Activated B cell treated with CpG ODN at 0.5 μM for 24 hours (primary cell): ENCODE measurements at regions of chr1 and their contacts with region 1.

Region 1: DNA sequence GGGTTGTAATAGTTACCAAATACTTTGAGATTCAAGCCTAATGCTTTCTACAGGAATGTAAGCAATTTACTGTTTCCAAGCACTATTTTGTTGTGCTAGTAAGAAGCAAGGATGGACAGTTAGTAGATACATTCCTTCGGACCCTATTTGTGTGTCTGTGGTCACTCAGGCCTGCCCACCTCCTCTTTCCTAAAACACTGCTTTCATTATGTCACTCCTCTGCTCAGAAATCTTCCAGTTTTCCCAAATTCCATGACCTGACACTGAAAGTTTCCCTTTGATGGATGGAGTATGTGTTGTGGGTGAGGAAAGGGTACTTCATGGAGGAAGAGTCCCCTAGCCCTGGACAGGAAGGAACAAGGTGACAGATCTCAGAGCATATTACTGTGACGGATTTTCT is 141.1 kb downstream of the DISP1 start:
- DNase-seq: no peak
- ATAC-seq: no peak
- H3K4me3 Mint-ChIP-seq: no peak overlapping the region
- H3K27ac Mint-ChIP-seq: no peak overlapping the region
- H3K4me1 Mint-ChIP-seq: no peaks in the 10 kb centered on the region
- H3K27me3 Mint-ChIP-seq: no peaks in the 10 kb centered on the region
- CTCF ChIP-seq: no peak

Region 2: DNA sequence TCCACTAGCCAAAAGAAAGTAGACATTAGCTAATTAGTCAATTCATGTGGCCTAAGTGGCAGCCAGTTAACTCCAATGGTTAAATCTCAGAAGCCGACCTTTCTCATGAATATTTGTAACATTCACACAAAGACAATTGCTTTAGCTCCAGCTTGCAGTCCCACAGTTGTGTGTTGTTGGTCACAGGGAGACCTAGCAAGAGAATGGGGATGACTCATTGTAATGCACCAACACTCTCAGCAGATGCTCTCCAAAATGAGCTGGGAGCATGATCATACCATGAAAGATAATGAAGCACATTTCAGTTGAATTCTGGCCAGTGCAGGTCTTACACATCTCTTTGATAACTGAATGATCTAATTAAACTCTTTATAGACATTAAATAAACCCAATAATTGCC is 1916.3 kb before region 1 on chr1:
- CTCF ChIA-PET with region 1: no interaction called
- POLR2A ChIA-PET with region 1: no interaction called
- intact Hi-C with region 1: loop called (anchors 5 kb)
- DNase-seq: no peak
- ATAC-seq: peak; percentile 69
- H3K4me3 Mint-ChIP-seq: no peak overlapping the region
- H3K27ac Mint-ChIP-seq: no peak overlapping the region
- H3K4me1 Mint-ChIP-seq: peaks cover 16% of the 10 kb centered on the region
- H3K27me3 Mint-ChIP-seq: no peaks in the 10 kb centered on the region
- CTCF ChIP-seq: no peak

Region 3: DNA sequence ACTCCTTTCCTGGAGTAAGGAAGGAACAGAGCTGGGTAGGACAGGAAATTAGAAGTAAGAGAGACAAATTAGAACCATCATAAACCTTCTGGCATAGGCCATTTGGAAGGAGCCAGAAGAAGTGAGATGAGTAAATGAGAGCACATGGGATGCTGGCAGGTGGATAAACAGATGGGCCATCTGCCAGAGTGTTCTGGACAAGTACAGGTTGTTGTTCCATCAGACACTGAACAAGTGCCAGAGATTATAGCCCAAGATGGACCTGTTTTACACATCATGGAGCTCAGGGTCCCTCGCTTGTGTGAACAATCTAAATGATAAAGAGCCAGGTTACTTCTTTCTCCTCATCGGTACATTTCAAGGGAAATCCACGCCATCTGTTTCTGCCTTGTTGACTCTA is 608.3 kb before region 1 on chr1:
- CTCF ChIA-PET with region 1: no interaction called
- POLR2A ChIA-PET with region 1: no interaction called
- intact Hi-C with region 1: no loop called
- DNase-seq: no peak
- ATAC-seq: no peak
- H3K4me3 Mint-ChIP-seq: no peak overlapping the region
- H3K27ac Mint-ChIP-seq: no peak overlapping the region
- H3K4me1 Mint-ChIP-seq: no peaks in the 10 kb centered on the region
- H3K27me3 Mint-ChIP-seq: peaks cover 17% of the 10 kb centered on the region
- CTCF ChIP-seq: no peak

Region 4: DNA sequence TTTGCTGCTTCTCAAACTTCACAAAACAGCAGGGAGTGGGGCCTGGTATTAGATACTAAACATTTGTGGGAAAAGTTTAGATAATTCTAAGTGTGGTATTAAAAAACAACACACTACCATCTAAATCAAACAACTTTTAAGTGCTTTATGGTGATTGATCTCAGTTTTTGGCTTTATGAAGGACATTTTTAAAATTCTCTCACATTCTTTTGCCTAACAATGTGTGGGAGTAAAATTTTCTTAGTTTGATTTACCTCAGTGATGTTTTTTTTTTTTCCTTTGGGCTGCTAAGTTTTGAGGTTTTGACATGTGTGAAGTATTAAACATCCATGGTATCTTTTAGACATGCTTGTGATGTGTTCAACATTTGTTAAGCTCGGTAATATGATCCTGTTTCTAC is 24.9 kb before region 1 on chr1:
- CTCF ChIA-PET with region 1: no interaction called
- POLR2A ChIA-PET with region 1: no interaction called
- intact Hi-C with region 1: no loop called
- DNase-seq: no peak
- ATAC-seq: no peak
- H3K4me3 Mint-ChIP-seq: no peak overlapping the region
- H3K27ac Mint-ChIP-seq: no peak overlapping the region
- H3K4me1 Mint-ChIP-seq: no peaks in the 10 kb centered on the region
- H3K27me3 Mint-ChIP-seq: no peaks in the 10 kb centered on the region
- CTCF ChIP-seq: no peak

Region 5: DNA sequence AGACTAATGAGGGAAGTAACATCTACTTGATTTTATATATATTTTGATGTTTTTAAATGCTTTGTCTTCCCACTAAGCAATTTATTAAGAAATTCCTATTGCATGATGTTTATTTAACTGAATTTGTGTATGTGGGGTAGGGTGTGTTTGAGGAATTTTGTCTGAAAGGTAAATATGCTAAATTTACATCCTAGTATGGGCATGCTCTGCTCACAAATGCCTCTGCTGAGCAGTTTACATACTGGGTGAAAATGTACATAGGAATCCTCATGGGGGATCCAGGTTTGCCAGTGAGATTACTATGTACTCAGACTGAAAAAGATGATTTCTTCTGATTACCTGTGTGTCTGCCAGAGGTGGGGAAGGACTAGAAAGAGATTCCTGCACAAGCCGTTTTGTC is 14.6 kb before region 1 on chr1:
- CTCF ChIA-PET with region 1: no interaction called
- POLR2A ChIA-PET with region 1: no interaction called
- intact Hi-C with region 1: no loop called
- DNase-seq: no peak
- ATAC-seq: no peak
- H3K4me3 Mint-ChIP-seq: no peak overlapping the region
- H3K27ac Mint-ChIP-seq: no peak overlapping the region
- H3K4me1 Mint-ChIP-seq: no peaks in the 10 kb centered on the region
- H3K27me3 Mint-ChIP-seq: no peaks in the 10 kb centered on the region
- CTCF ChIP-seq: no peak